HCT116 (cell line): ENCODE measurements at regions of chr12 and their contacts with region 1.

Region 1: GRCh38 chr12:127060310-127060847 is 1206.6 kb upstream of the TMEM132C start:
- DNase-seq: peak; percentile 80
- ATAC-seq: peak; percentile 83
- H3K4me3 ChIP-seq: peak overlapping the region; percentile 50 to 79
- H3K27ac ChIP-seq: peak overlapping the region; percentile 62
- H3K4me1 ChIP-seq: peaks cover 11 to 46% of the 10 kb centered on the region in 2 experiments; a peak in 3 of 4 replicates
- H3K27me3 ChIP-seq: no peaks in the 10 kb centered on the region
- CTCF ChIP-seq: no peak
- POLR2A ChIP-seq: peak; percentile 82
- RAD21 ChIP-seq: no peak

Region 2: GRCh38 chr12:127125607-127126259 is 65.4 kb after region 1 on chr12:
- CTCF ChIA-PET with region 1: no interaction called
- POLR2A ChIA-PET with region 1: no interaction called
- RAD21 ChIA-PET with region 1: no interaction called
- intact Hi-C with region 1: loop called (anchors 5 kb)
- DNase-seq: peak; percentile 97
- ATAC-seq: peak; percentile 84
- H3K4me3 ChIP-seq: peak overlapping the region; percentile 15 to 33
- H3K27ac ChIP-seq: peak overlapping the region; percentile 85
- H3K4me1 ChIP-seq: peaks cover 47 to 61% of the 10 kb centered on the region in 2 experiments
- H3K27me3 ChIP-seq: no peaks in the 10 kb centered on the region
- CTCF ChIP-seq: 0 out of 6 replicates have a peak, but pooled peaks of 1 of the 3 experiments have one; percentile 2
- POLR2A ChIP-seq: no peak
- RAD21 ChIP-seq: peak; percentile 21; the same call in 1 of the 2 replicates

Region 3: GRCh38 chr12:127241072-127241817 is 180.9 kb after region 1 on chr12:
- CTCF ChIA-PET with region 1: no interaction called
- POLR2A ChIA-PET with region 1: no interaction called
- RAD21 ChIA-PET with region 1: no interaction called
- intact Hi-C with region 1: no loop called
- DNase-seq: no peak
- ATAC-seq: no peak
- H3K4me3 ChIP-seq: no peak overlapping the region
- H3K27ac ChIP-seq: no peak overlapping the region
- H3K4me1 ChIP-seq: no peaks in the 10 kb centered on the region
- H3K27me3 ChIP-seq: no peaks in the 10 kb centered on the region
- CTCF ChIP-seq: no peak
- POLR2A ChIP-seq: no peak
- RAD21 ChIP-seq: no peak